ENCODE measurements at regions of chr22 and their contacts with region 1.

Region 1: DNA sequence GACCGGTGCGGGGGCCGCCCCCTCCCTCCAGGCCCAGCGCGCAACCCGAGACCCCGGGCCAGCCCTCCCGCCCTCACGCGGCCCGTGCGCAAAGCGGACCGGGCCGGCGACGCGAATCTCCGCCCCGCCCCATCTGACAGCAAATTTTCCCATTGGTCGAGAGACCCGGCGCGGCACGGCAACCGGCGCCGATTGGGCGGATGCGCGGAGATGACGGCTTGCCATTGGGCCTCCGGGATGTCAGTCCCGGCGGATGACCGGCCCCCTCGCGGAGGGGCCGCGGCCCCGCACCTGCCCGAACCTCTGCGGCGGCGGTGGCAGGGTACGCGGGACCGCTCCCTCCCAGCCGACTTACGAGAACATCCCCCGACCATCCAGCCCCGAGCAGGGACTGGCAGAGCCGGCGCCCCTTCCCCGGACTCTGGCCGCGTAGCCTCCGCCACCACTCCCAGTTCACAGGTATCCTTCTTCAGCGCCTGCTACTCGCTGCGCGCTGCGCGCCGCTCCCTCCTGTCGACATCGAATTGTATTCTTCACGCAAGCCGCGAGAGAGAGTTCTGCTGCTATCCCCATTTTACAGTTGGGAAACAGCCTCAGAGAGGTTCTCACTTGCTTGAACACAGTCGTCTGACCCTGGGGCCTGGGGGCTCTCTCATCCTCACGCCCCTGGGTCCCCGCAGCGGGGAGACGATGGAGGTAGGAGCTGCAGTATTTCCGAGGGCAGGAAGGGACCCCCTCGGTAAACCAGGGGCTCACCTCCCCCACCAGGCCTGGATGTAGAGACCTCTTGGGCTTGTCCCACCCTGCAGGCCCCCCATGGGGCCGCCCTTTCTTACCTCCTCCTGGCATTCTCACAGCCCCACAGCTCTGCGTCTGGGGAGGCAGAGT is at the start of gene ARVCF:
- DNase-seq: peak; percentile 57 to 93
- H3K4me3 ChIP-seq: peak within 1 kb of the TSS; percentile 84 to 91
- H3K27ac ChIP-seq: peak within 1 kb of the TSS in 1 of 2 donors; percentile 21
- H3K4me1 ChIP-seq: peaks cover 6 to 21% of the 10 kb centered on the region in 2 donors
- H3K27me3 ChIP-seq: no peaks in the 10 kb centered on the region
- CTCF ChIP-seq: peak in 2 of 3 experiments; percentile 30 to 48
- total RNA-seq, gene ARVCF: 252 TPM

Region 2: DNA sequence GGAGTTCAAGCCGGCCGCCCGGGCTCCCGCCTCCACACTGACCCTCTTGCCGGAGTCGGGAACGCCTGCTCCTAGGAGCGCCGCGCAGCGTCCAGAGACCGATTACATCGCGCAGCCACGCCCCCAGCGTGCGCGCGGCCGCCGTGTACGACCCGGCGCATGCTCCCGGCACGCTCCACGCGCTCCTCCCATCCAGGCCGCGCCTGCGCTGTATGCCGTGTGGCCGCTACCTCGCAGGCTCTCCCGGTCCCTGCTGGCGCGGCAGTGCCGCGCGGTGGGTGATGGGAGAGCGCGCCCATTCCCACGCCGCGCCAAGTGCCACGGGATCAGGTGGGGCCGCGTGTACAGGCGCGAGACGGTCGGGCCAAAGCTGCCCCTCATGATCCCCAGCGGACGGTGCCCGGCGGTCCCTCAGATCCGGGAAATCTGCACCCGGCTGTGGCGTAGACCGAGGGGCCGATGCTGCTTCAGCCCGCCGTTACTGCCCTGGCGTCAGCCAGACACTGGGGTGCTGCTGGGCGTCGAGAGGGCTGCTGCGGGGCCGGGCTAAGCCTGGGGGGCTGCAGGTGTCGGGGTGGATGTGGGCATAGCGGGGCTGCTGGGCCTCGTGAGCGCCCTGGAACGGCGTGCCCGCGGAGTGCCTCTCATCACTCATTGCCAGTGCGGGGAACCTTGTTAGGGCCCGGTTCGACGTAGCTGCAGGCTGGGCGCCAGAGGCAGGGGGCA is 162.0 kb before region 1 on chr22 and contains the starts of genes GNB1L and RTL10:
- intact Hi-C with region 1: loop called (anchors 10 kb)
- DNase-seq: peak; percentile 82 to 98
- H3K4me3 ChIP-seq: peak within 1 kb of the TSS; percentile 72 to 73
- H3K27ac ChIP-seq: peak within 1 kb of the TSS; percentile 91 to 94
- H3K4me1 ChIP-seq: peaks cover 14% of the 10 kb centered on the region in 2 donors
- H3K27me3 ChIP-seq: no peaks in the 10 kb centered on the region
- CTCF ChIP-seq: peak in 2 of 3 experiments; percentile 13 to 20
- total RNA-seq, gene GNB1L: 7.9 TPM
- total RNA-seq, gene RTL10: 8.8 TPM

Region 3: DNA sequence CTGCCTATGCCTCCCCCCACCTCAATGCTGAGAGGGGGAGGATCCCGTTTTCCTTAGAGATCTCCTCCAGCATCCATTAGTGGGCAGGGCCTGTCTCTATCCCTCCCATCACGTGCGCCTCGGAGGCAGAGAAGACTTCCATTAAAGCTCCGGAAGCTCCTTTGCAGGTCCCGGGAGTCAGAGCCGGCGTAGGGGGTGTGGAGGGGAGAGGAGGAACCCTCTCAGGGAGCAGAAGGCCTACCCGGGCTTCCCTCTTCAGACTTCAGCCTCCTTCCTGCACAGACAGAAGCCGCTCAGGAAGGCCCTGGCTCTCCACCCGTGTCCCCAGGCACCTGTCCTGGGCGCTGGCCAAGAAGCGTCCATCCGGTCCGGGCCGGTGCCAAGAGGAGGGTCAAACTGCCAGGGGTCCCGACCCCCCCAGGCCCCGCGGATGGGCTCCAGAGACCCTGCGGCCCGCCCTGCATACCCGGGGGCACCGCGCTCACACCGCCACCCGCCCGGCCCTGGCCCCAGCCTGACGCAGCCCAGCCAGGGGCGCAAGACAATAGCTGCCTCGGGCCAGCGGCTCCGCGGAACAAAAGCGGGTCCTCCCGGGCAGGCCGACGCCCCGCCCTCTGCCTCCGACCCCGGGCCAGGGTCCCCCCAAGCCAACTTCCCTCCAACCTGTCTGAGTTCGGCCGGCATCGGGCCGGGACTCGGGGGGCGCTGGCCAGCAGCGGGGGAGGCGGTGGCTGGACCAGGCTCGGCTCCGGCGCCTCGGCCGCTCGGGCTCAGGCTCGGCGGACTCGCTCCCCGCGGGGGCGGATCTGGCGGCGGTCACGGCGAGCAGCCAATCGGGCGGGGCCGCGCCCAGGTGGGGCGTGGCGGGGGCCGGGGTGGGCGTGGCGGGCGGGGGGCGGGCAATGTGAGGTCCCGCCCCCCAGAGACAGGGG is 30.3 kb before region 1 on chr22:
- intact Hi-C with region 1: loop called (anchors 2 kb)
- DNase-seq: peak; percentile 42 to 88
- H3K4me3 ChIP-seq: peak overlapping the region; percentile 70 to 93
- H3K27ac ChIP-seq: peak overlapping the region; percentile 97 to 99
- H3K4me1 ChIP-seq: peaks cover 38 to 49% of the 10 kb centered on the region in 2 donors
- H3K27me3 ChIP-seq: no peaks in the 10 kb centered on the region
- CTCF ChIP-seq: no peak

Region 4: GRCh38 chr22:20079745-20080444 is 62.9 kb after region 1 on chr22 and contains the start of gene DGCR8:
- intact Hi-C with region 1: loop called (anchors 1 kb)
- DNase-seq: peak; percentile 50 to 95
- H3K4me3 ChIP-seq: peak within 1 kb of the TSS; percentile 80 to 83
- H3K27ac ChIP-seq: peak within 1 kb of the TSS; percentile 82 to 89
- H3K4me1 ChIP-seq: peaks cover 12 to 28% of the 10 kb centered on the region in 2 donors
- H3K27me3 ChIP-seq: no peaks in the 10 kb centered on the region
- CTCF ChIP-seq: no peak
- total RNA-seq, gene DGCR8: 18.0 TPM

Region 5: GRCh38 chr22:20130739-20131596 is 114.0 kb after region 1 on chr22:
- intact Hi-C with region 1: loop called (anchors 5 kb)
- DNase-seq: peak; percentile 21 to 93
- H3K4me3 ChIP-seq: peak overlapping the region; percentile 82 to 100
- H3K27ac ChIP-seq: peak overlapping the region; percentile 90 to 98
- H3K4me1 ChIP-seq: peaks cover 23 to 37% of the 10 kb centered on the region in 2 donors
- H3K27me3 ChIP-seq: no peaks in the 10 kb centered on the region
- CTCF ChIP-seq: no peak

Measured in ascending aorta (tissue), 2 donors.